AG04450 (cell line): ENCODE measurements at regions of chr20 and their contacts with region 1.

Region 1: DNA sequence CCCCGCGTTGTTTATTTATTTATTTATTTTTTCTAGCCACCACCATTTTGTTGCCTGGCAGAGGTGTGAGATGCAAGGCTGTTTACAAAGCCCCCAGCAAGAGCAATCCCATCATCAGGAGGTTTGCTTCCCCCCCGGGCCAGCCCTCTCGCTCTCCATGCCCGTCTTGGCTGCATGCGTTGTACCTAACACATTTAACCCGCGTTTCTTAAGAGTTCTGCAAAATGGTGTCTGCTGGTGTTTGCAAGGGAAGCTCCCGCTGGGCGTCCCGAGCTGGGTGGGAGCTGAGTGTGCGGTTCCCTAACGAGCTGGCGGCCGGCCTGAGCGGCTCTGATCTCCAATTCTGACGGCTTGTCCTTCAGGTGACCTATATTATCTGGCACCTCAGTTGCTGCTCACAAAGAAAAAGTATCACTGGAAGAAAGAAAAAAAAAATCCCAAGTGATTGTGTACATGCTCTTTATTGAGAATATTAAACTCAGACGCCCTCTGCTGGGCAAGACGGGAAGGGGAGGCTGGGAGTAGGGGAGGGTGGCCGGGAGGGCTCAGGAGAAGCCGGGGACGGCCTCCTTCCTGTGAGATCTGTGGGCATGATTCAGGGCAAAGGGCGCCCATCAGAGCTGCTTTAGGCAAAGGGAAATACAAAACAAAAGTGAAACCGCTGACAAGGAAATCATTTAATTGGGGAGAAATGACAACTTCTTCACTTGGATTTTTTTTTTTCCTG is 154.8 kb downstream of the BCAS1 start:
- DNase-seq: peak; percentile 74
- H3K4me3 ChIP-seq: peak overlapping the region; percentile 60
- H3K27ac ChIP-seq: peak overlapping the region; percentile 61
- H3K27me3 ChIP-seq: no peaks in the 10 kb centered on the region
- CTCF ChIP-seq: peak; percentile 88

Region 2: DNA sequence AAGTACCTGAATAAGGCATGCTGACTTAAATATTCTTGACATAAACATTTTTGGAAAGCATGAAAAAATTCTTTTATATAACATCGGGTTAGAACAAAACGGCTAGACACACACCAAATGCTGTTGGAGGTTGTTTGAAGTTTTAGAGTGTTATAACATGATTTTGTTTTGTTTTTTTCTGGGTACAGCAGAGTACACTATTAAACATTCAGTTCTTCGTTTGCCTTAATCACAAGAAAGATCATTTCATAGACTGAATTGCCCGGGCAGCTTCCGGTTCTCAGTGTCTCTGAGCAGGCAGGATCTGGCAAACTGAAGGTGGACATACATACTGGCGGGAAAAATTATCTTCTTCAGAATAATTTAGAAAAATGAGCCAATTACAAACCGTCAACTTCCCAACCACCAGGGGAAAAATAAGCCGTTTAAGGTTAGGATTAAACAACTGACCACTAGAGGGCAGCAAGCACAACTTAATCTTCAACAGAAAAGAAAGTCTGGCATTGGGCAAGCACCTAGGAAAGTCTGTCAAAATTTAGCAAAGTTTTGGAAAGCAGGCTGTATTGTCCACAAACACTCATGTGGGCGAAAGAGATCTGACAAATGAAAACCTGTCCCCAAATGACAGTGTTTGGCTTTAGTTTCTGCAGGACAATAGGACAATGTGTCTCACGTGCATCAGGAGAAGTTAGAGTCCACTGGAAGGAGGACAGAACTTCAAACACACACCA is 337.0 kb before region 1 on chr20:
- CTCF ChIA-PET with region 1: interaction called, 40 read pairs
- POLR2A ChIA-PET with region 1: interaction called, 3 read pairs
- DNase-seq: peak; percentile 77
- H3K4me3 ChIP-seq: peak overlapping the region; percentile 31; the same call in 1 of the 2 replicates
- H3K27ac ChIP-seq: no peak overlapping the region
- H3K27me3 ChIP-seq: no peaks in the 10 kb centered on the region
- CTCF ChIP-seq: peak; percentile 83

Region 3: DNA sequence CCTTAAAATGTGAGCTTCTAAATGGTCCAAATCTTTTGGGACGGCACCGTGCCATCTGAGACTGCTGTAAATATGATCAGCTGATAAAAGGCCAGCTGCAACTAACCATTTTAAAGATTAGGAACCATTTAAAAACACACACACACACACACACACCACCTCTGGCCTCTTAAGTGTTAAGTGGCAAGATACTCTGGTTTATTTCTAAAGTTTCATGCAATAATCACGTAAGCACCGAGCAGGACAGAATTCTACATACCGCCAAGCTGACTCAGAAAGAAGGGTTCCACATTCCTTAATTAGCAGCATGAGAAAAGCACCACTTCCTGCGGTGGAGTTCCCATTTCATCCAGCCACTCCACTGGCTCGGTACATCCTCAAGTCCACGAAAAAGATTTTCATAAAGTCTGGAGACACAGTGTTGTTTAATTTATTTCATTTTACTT is 304.1 kb before region 1 on chr20:
- CTCF ChIA-PET with region 1: interaction called, 15 read pairs
- POLR2A ChIA-PET with region 1: no interaction called
- DNase-seq: peak; percentile 92
- H3K4me3 ChIP-seq: no peak overlapping the region
- H3K27ac ChIP-seq: peak overlapping the region; percentile 83
- H3K27me3 ChIP-seq: no peaks in the 10 kb centered on the region
- CTCF ChIP-seq: no peak

Region 4: DNA sequence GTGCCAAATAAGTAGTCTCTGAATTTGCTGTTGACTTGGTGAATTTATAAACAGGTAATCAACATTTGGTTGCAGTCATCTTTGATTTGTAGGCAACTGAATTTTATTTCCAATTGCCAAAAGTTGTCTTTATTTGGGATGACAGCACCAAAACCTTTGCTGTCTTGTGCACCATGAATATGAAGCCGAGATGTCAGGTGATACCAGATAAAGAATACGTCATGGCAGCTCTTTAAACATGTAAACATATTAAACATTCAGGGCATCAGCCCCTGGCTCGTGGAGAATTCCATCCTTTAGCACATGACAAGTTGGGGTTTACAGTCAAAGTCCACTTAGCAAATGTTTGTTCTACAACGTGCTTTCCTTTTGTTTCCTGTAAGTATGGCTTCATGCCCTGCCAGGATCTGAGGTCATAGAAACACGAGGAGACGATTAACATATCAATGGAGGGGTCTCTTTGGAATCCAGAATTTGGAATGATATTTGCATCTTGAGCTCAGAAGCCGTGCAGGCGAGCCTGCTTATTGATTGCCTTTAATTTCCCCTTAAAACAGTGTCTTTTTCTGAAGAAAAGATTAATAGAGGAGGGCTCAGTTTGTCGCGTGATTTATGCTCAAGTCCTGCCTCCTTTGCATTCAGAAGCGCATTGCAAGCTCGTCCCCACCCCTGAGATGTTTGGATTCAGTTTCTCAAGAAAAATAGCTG is 151.7 kb before region 1 on chr20:
- CTCF ChIA-PET with region 1: interaction called, 12 read pairs
- POLR2A ChIA-PET with region 1: no interaction called
- DNase-seq: no peak
- H3K4me3 ChIP-seq: no peak overlapping the region
- H3K27ac ChIP-seq: peak overlapping the region; percentile 77
- H3K27me3 ChIP-seq: no peaks in the 10 kb centered on the region
- CTCF ChIP-seq: no peak

Region 5: GRCh38 chr20:53865901-53866794 is 49.5 kb before region 1 on chr20:
- CTCF ChIA-PET with region 1: interaction called, 28 read pairs
- POLR2A ChIA-PET with region 1: interaction called, 9 read pairs
- DNase-seq: peak; percentile 27
- H3K4me3 ChIP-seq: peak overlapping the region; percentile 31
- H3K27ac ChIP-seq: peak overlapping the region; percentile 77
- H3K27me3 ChIP-seq: no peaks in the 10 kb centered on the region
- CTCF ChIP-seq: no peak

Region 6: DNA sequence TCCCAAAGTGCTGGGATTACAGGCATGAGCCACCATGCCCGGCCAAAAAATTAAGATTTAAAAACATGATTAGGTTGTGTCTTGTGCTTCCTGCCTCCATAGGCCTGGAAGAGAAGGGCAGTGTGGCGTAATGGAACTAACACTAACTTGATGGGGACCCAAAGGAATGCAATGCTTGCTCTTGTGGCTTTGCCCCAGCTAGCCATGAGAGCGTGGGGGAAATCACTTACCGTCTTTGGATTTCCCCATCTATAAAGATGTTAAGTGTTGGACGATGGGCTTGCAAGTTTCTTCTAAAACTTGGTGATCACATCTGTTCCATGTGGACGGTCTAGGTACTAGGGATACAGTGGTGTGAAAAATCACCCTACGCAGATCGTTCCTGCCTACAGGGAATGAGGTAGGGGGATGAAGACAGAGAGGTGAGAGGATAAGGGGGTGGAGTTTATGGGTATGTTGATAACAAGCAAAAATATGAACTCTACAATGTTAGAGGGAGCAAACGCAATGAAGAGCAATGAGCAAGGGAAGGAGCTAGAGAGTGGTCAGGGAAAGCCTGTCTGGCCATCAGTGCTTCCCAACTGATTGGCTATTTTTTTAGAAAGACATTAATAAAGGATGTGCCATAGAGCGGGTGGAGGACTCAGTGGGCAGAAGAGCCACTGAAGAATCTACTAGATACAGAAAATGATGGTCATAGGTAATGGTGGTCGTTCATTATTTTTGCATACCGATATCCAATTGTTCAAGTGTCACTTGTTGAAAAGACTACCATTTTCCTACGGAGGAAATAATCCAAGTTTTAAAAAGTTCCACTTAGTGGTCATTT is 10.4 kb before region 1 on chr20:
- CTCF ChIA-PET with region 1: interaction called, 30 read pairs
- POLR2A ChIA-PET with region 1: interaction called, 6 read pairs
- DNase-seq: no peak
- H3K4me3 ChIP-seq: no peak overlapping the region
- H3K27ac ChIP-seq: no peak overlapping the region
- H3K27me3 ChIP-seq: no peaks in the 10 kb centered on the region
- CTCF ChIP-seq: no peak

Region 7: GRCh38 chr20:53934421-53935343 is 19.1 kb after region 1 on chr20:
- CTCF ChIA-PET with region 1: interaction called, 38 read pairs
- POLR2A ChIA-PET with region 1: no interaction called
- DNase-seq: no peak
- H3K4me3 ChIP-seq: no peak overlapping the region
- H3K27ac ChIP-seq: no peak overlapping the region
- H3K27me3 ChIP-seq: no peaks in the 10 kb centered on the region
- CTCF ChIP-seq: no peak